ENCODE measurements at regions of chr21 and their contacts with region 1.

Region 1: GRCh38 chr21:42107881-42108553 is 36.9 kb downstream of the UMODL1 start:
- DNase-seq: peak; percentile 83
- ATAC-seq: peak; percentile 99
- H3K4me3 Mint-ChIP-seq: peak overlapping the region; percentile 4
- H3K27ac Mint-ChIP-seq: no peak overlapping the region
- H3K4me1 Mint-ChIP-seq: peaks cover 11% of the 10 kb centered on the region
- H3K27me3 Mint-ChIP-seq: no peaks in the 10 kb centered on the region

Region 2: GRCh38 chr21:41816220-41817165 is 291.5 kb before region 1 on chr21:
- CTCF ChIA-PET with region 1: interaction called, 24 read pairs
- POLR2A ChIA-PET with region 1: no interaction called
- intact Hi-C with region 1: loop called in 1 of 2 experiments (anchors 2 kb)
- DNase-seq: peak; percentile 78
- ATAC-seq: peak; percentile 88
- H3K4me3 Mint-ChIP-seq: no peak overlapping the region
- H3K27ac Mint-ChIP-seq: no peak overlapping the region
- H3K4me1 Mint-ChIP-seq: peaks cover 6% of the 10 kb centered on the region
- H3K27me3 Mint-ChIP-seq: no peaks in the 10 kb centered on the region

Region 3: GRCh38 chr21:42062236-42063022 is 45.6 kb before region 1 on chr21:
- CTCF ChIA-PET with region 1: interaction called, 6 read pairs
- POLR2A ChIA-PET with region 1: no interaction called
- intact Hi-C with region 1: loop called in 1 of 2 experiments (anchors 2 kb)
- DNase-seq: peak; percentile 86
- ATAC-seq: peak; percentile 65
- H3K4me3 Mint-ChIP-seq: peak overlapping the region; percentile 60
- H3K27ac Mint-ChIP-seq: peak overlapping the region; percentile 86
- H3K4me1 Mint-ChIP-seq: peaks cover 43% of the 10 kb centered on the region
- H3K27me3 Mint-ChIP-seq: no peaks in the 10 kb centered on the region

Region 4: GRCh38 chr21:42073145-42074092 is 34.6 kb before region 1 on chr21:
- CTCF ChIA-PET with region 1: interaction called, 11 read pairs
- POLR2A ChIA-PET with region 1: no interaction called
- intact Hi-C with region 1: no loop called
- DNase-seq: no peak
- ATAC-seq: no peak
- H3K4me3 Mint-ChIP-seq: no peak overlapping the region
- H3K27ac Mint-ChIP-seq: no peak overlapping the region
- H3K4me1 Mint-ChIP-seq: no peaks in the 10 kb centered on the region
- H3K27me3 Mint-ChIP-seq: no peaks in the 10 kb centered on the region

Region 5: DNA sequence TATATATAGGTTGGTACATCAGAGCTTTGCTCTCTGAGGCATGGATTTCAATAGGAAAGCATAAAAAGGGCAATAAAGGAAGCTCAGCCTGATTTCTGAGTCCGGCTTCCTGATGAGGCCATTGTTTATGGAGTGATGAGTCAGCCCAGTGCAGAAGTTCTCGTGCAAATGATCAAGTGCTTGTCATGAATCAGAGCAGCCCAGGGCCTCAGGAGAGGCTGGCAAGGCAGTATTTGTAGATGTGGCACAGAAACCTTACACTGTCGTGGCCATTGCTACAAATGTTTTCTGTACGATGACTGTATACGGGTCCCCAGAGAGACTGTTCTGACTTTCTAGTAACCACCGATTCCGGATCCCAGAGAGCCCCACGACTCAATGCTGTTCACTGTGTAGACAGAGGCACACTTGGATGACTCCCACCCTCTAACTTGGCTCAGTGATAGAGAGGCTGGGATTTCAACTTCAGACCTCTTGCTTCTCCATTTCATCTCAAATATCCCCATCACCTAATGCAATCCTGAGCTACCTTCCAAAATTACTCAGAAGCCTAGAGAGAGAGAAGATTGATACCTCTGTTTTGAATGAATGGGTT is 10.1 kb before region 1 on chr21:
- CTCF ChIA-PET with region 1: interaction called, 19 read pairs
- POLR2A ChIA-PET with region 1: no interaction called
- intact Hi-C with region 1: no loop called
- DNase-seq: peak; percentile 32
- ATAC-seq: peak; percentile 87
- H3K4me3 Mint-ChIP-seq: no peak overlapping the region
- H3K27ac Mint-ChIP-seq: no peak overlapping the region
- H3K4me1 Mint-ChIP-seq: peaks cover 7% of the 10 kb centered on the region
- H3K27me3 Mint-ChIP-seq: no peaks in the 10 kb centered on the region

Region 6: GRCh38 chr21:42330380-42331359 is 222.7 kb after region 1 on chr21:
- CTCF ChIA-PET with region 1: no interaction called
- POLR2A ChIA-PET with region 1: no interaction called
- intact Hi-C with region 1: no loop called
- DNase-seq: no peak
- ATAC-seq: no peak
- H3K4me3 Mint-ChIP-seq: no peak overlapping the region
- H3K27ac Mint-ChIP-seq: no peak overlapping the region
- H3K4me1 Mint-ChIP-seq: no peaks in the 10 kb centered on the region
- H3K27me3 Mint-ChIP-seq: no peaks in the 10 kb centered on the region

Measured in activated CD4-positive, alpha-beta T cell treated with anti-CD3 and anti-CD28 coated beads for 36 hours (primary cell).